ENCODE measurements at regions of chr16 and their contacts with region 1.

Region 1: DNA sequence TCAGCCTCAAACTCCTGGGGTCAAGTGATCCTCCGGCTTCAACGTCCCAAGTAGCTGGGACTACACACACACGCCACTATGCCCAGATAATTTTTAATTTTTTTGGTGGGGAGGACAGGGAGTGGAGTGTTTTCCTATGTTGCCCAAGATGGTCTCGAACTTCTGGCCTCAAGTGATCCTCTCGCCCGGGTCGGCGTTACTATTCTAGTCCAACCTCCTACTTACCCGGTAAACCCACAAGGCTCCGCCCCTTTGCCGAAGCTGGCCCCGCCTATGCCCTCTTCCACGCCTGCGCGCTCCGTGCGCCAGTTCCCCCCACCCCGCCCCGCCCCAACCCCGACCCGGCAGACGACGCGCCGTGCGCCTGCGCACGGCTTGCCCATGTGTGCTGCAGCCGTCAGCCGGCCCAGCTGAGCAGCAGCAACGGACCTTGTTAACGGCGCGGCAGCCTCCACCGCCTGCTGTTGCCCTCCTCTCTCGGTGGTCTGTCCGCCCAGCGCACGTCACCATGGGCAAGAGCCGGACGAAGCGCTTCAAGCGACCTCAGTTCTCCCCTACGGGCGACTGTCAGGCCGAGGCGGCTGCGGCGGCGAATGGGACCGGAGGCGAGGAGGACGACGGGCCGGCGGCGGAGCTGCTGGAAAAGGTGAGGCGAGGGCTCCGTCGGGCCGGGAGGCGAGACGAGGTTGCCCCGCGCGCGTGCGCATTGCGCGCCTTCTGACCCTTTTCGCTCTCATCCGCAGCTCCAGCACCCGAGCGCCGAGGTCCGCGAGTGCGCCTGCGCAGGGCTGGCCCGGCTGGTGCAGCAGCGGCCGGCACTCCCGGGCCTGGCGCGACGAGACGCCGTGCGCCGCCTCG is at the start of gene HEATR3:
- DNase-seq: peak; percentile 94
- H3K4me3 Mint-ChIP-seq: peak within 1 kb of the TSS; percentile 87
- H3K27ac Mint-ChIP-seq: peak within 1 kb of the TSS; percentile 92
- H3K4me1 Mint-ChIP-seq: peaks cover 32% of the 10 kb centered on the region
- H3K27me3 Mint-ChIP-seq: no peaks in the 10 kb centered on the region
- total RNA-seq, gene HEATR3: 24.9 and 25.9 TPM in 2 replicates

Region 2: GRCh38 chr16:50024684-50025536 is 40.9 kb before region 1 on chr16 and contains the start of gene CNEP1R1:
- intact Hi-C with region 1: loop called (anchors 1 kb)
- DNase-seq: peak; percentile 93
- H3K4me3 Mint-ChIP-seq: peak within 1 kb of the TSS; percentile 95
- H3K27ac Mint-ChIP-seq: peak within 1 kb of the TSS; percentile 84
- H3K4me1 Mint-ChIP-seq: peaks cover 18% of the 10 kb centered on the region
- H3K27me3 Mint-ChIP-seq: peaks cover 4% of the 10 kb centered on the region
- total RNA-seq, gene CNEP1R1: 23.4 and 26.1 TPM in 2 replicates

Region 3: DNA sequence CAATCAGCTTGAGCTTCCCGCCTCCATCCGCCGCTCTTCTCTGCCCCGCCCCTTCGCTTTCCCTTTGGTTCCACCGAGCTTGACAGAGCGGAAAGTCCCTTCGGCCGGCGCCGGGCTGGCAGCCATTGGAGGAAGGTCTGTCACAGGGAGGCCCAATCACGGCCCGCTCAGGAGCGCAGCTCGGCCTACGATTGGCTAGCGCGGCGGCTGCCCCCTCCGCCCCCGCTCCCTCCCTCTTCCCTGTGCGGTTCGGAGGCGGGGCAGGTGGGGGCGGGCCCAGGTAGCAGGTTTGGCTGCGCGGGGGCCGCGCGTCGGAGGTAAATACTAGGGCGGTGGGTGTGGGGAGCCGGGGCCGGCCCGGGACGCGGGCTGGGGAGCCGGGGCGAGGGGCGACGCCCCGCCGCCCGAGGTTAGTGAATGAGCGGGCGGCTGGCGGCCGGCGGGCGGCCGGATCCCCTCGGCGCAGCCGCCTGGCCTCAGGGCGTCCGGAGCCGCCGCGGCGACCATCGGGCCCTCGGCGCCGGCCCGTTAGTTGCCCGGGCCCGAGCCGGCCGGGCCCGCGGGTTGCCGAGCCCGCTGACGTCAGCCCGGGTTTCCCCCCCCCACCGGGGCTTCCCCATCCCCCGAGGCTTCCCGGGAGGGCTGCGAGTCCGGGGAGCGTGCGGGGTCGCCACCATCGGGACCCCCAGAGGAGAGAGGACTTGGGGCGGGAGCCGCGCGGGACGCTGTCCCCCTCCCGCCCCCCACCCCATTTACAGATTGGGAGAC is 676.1 kb after region 1 on chr16 and contains the start of gene CYLD:
- intact Hi-C with region 1: loop called (anchors 10 kb)
- DNase-seq: peak; percentile 100
- H3K4me3 Mint-ChIP-seq: peak within 1 kb of the TSS; percentile 90
- H3K27ac Mint-ChIP-seq: peak within 1 kb of the TSS; percentile 95
- H3K4me1 Mint-ChIP-seq: peaks cover 43% of the 10 kb centered on the region
- H3K27me3 Mint-ChIP-seq: no peaks in the 10 kb centered on the region
- total RNA-seq, gene CYLD: 189 and 201 TPM in 2 replicates

Measured in activated T-helper 2 cell treated with anti-CD3 and anti-CD28 coated beads, Interferon-gamma antibody, Interleukin-2, Interleukin-4, amounts not matched to agents 10 μg/mL and 5 μg/mL and 100 μg/mL, durations not matched to agents 14 hours and 24 hours and 36 hours (primary cell).